WTC11 (cell line): ENCODE measurements at regions of chr2 and their contacts with region 1.

Region 1: DNA sequence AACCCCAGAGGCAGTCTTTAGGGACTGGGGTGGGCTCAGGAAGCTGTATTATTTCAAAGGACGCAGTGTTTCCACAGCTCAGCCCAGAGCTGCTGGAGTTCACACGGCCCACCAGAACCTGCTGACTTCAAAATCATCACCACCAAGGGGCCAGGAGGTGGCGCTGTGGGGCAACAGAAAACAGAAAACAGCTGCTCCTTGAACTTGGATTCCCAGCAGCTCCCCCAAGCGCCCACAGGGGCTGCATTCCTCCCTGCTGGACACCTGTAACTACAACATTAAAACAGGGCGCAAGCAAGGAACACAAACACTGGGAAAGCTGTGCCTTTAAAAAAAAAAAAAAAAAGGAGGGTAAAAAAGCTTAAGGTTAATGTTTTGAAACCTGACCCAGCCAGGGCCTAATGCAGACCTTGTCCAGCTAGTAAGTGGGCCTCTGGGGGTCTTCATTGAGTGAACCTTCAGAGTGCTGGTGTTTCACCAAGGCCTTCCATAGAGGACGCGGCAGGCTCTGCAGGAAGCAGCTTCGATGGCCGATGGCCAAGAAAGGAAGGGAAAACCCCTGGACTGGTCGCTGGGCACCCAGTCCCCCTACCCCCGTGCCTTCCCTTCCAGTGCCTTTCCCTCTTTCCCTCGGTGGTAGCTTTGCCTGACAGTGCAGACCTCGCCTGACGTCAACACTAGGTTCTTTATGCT is 25.9 kb downstream of the MLPH start:
- DNase-seq: peak; percentile 92
- ATAC-seq: peak; percentile 87
- H3K4me3 Mint-ChIP-seq: no peak overlapping the region
- H3K27ac Mint-ChIP-seq: no peak overlapping the region
- H3K4me1 Mint-ChIP-seq: peaks cover 12% of the 10 kb centered on the region
- H3K27me3 Mint-ChIP-seq: no peaks in the 10 kb centered on the region; the same call in 1 of the 2 replicates
- CTCF ChIP-seq: peak; percentile 94

Region 2: DNA sequence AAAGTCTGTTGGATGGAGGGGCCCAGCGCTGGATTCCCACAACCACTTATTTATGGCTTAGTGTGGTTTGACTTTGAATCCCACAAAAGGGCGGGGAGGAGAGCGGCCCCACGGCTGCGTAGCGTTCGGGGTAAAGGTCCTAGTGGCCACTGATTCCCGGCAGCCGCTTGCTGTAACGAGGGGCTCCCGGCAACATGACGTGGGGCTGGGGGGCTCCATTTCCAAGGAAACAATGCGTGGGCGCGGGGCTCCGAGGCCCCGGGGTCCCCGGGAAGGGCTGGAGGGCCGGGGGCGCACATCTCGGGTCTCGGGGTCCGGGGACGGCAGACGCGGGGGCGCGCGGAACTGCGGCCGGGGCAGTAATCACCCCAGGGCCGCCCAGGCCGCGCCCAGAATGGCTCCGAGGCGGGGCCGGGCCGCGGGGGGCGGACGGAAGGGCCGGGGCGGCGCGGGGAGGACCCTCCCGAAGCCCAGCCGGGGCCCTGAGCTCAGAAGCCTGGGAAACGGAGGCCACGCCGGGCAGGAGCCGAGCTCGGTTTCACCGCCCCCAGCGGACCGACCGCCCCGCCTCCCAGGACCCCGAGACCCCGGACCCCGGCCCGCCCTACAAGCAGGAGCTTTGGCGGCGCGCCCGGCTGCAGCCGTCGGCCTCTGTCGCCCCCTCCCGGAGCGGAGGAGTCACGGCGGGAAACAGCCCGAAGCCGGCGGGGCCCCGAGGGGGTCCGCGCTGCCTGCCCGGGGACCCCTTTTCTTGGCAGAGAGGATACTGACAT is 37.8 kb before region 1 on chr2:
- CTCF ChIA-PET with region 1: interaction called, 60 read pairs
- POLR2A ChIA-PET with region 1: no interaction called
- DNase-seq: peak; percentile 88
- ATAC-seq: peak; percentile 81
- H3K4me3 Mint-ChIP-seq: peak overlapping the region; percentile 84
- H3K27ac Mint-ChIP-seq: peak overlapping the region; percentile 53; the same call in 1 of the 2 replicates
- H3K4me1 Mint-ChIP-seq: peaks cover 18% of the 10 kb centered on the region
- H3K27me3 Mint-ChIP-seq: peaks cover 47% of the 10 kb centered on the region
- CTCF ChIP-seq: peak; percentile 70

Region 3: GRCh38 chr2:237500681-237501424 is 12.1 kb before region 1 on chr2:
- CTCF ChIA-PET with region 1: interaction called, 16 read pairs
- POLR2A ChIA-PET with region 1: interaction called, 3 read pairs
- DNase-seq: no peak
- ATAC-seq: no peak
- H3K4me3 Mint-ChIP-seq: no peak overlapping the region
- H3K27ac Mint-ChIP-seq: peak overlapping the region; percentile 12; the same call in 1 of the 2 replicates
- H3K4me1 Mint-ChIP-seq: peaks cover 24% of the 10 kb centered on the region
- H3K27me3 Mint-ChIP-seq: no peaks in the 10 kb centered on the region
- CTCF ChIP-seq: no peak

Region 4: GRCh38 chr2:237547841-237548416 is 35.0 kb after region 1 on chr2:
- CTCF ChIA-PET with region 1: interaction called, 17 read pairs
- POLR2A ChIA-PET with region 1: interaction called, 4 read pairs
- DNase-seq: peak; percentile 62
- ATAC-seq: peak; percentile 85
- H3K4me3 Mint-ChIP-seq: no peak overlapping the region
- H3K27ac Mint-ChIP-seq: no peak overlapping the region
- H3K4me1 Mint-ChIP-seq: peaks cover 13% of the 10 kb centered on the region
- H3K27me3 Mint-ChIP-seq: no peaks in the 10 kb centered on the region
- CTCF ChIP-seq: no peak

Region 5: GRCh38 chr2:237581751-237582746 is 69.1 kb after region 1 on chr2:
- CTCF ChIA-PET with region 1: interaction called, 12 read pairs
- POLR2A ChIA-PET with region 1: no interaction called
- DNase-seq: no peak
- ATAC-seq: peak; percentile 19; the same call in 1 of the 2 replicates
- H3K4me3 Mint-ChIP-seq: no peak overlapping the region
- H3K27ac Mint-ChIP-seq: no peak overlapping the region
- H3K4me1 Mint-ChIP-seq: peaks cover 36% of the 10 kb centered on the region
- H3K27me3 Mint-ChIP-seq: no peaks in the 10 kb centered on the region
- CTCF ChIP-seq: no peak

Region 6: DNA sequence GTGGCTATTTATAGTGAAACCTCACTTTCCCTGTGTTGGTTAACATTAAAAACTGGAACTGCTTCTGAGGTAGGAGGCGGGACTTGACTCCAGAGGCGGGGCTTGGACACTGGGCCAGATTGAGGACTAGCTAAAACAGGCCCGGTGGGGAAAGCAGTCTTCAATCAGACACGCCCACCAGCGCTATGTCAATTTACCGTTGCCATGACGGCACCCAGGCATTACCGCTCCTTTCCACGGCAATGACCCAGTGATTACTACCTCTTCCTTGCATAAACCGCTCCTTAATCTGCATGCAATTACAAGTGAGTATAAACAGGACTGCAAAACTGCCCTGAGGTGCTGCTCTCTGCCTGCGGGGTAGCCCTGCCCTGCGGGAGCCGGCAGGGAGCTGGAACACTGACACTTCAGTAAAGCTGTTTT is 149.8 kb after region 1 on chr2:
- CTCF ChIA-PET with region 1: interaction called, 12 read pairs
- POLR2A ChIA-PET with region 1: no interaction called
- DNase-seq: peak; percentile 93
- ATAC-seq: peak; percentile 92
- H3K4me3 Mint-ChIP-seq: peak overlapping the region; percentile 23; the same call in 1 of the 2 replicates
- H3K27ac Mint-ChIP-seq: peak overlapping the region; percentile 58
- H3K4me1 Mint-ChIP-seq: peaks cover 57% of the 10 kb centered on the region
- H3K27me3 Mint-ChIP-seq: no peaks in the 10 kb centered on the region
- CTCF ChIP-seq: no peak

Region 7: GRCh38 chr2:237774802-237775553 is 262.1 kb after region 1 on chr2:
- CTCF ChIA-PET with region 1: interaction called, 15 read pairs
- POLR2A ChIA-PET with region 1: no interaction called
- DNase-seq: peak; percentile 71
- ATAC-seq: peak; percentile 96
- H3K4me3 Mint-ChIP-seq: no peak overlapping the region
- H3K27ac Mint-ChIP-seq: peak overlapping the region; percentile 83
- H3K4me1 Mint-ChIP-seq: peaks cover 6% of the 10 kb centered on the region; the same call in 1 of the 2 replicates
- H3K27me3 Mint-ChIP-seq: no peaks in the 10 kb centered on the region
- CTCF ChIP-seq: peak; percentile 72